Activated CD8-positive, alpha-beta memory T cell treated with anti-CD3 and anti-CD28 coated beads, Interleukin-2, amount 10 ng/mL, durations not matched to agents 7 days and 5 days (primary cell): ENCODE measurements at regions of chr2 and their contacts with region 1.

Region 1: DNA sequence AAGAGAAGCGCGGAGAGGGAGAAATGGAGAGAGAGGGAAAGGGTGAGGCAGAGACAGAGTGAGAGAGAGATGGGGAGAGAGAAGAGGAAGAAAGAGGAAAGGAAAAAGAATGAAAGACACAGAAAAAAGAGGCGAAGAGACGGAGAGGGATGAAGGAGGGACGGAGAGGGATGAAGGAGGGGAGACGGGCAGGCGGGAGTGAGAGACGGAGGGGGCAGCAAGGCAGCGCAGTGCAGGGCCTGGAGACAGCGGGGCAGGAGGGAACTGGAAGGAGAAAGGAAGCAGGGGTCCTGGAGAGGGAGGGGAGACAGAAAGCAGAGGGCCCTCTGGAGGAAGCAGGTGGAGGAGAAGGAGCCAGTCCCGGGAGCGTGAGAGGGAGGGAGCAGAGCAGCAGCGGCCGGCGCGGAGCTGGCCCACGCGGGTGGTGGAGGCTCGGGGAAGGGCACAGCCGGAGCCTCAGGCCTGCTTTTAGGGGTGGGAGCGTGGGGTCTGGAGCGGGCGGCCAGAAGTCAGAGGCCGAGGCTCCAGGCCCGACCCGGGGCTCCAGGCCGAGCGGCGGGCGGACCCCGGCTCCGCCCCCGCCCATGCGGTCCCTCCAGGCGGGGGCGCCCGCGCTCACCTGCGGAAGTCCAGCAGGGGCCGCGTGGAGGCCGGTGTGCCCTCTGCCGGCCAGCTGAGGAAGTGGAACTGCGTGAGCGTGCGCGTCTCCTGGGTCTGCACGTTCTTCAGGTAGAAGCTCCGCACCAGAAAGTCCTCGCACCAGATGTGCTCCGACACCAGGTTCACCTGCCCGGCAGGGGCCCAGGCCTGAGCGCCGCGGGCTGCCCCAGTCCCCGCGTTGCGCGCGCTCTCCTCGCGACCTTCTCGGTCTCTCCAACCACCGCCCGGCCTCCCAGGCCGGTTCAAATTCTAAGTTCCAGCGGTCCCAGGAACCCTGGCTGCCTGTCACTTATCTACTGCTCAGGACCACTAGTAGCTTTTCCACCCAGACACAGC is 14.5 kb downstream of the PTPRN start:
- DNase-seq: peak; percentile 91
- ATAC-seq: peak; percentile 87
- H3K4me3 Mint-ChIP-seq: peak overlapping the region; percentile 70
- H3K27ac Mint-ChIP-seq: peak overlapping the region; percentile 63
- H3K4me1 Mint-ChIP-seq: peaks cover 15% of the 10 kb centered on the region
- H3K27me3 Mint-ChIP-seq: peaks cover 17% of the 10 kb centered on the region

Region 2: DNA sequence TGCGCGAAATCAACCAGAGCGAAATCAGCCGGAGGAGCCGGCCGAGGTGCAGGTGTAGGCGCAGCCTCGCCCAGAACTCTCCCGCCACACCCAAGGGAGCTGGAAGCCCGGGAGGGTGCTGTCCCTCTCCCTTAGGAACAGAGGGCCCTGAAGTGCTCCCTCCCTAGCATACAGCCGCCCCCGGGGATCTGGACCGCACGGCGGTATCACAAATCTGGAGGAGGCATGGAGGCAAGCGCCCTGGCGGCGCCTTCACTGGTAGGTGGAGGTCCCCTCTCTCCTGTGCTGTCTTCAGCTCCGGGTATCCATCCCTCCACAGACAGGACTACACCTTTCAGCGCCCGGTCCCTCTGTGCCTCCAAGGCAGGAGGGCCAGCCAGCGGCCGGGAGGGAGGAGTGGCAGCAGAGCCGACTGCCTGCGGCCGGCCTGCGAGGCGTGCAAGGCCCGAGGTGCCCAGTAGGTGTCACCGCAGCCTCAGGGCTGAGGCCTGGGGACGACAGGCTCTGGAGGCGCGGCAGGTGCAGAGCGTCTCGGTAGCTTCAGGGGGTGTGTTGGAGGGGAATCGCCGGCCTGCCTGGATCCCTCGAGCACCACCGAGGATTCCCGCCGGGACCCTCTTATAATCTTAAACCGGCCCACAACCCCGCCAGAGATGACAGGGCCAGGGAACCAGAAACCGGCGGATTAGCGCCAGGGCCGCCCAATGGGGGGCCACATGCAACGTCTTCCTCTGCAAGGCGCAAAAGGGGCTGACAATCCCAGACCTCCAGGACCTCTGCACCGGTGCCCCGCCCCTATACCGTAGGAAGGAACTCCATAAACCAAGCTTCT is 236.7 kb before region 1 on chr2:
- CTCF ChIA-PET with region 1: interaction called, 14 read pairs
- DNase-seq: peak; percentile 84
- ATAC-seq: peak; percentile 91
- H3K4me3 Mint-ChIP-seq: peak overlapping the region; percentile 39
- H3K27ac Mint-ChIP-seq: no peak overlapping the region
- H3K4me1 Mint-ChIP-seq: peaks cover 22% of the 10 kb centered on the region
- H3K27me3 Mint-ChIP-seq: peaks cover 64% of the 10 kb centered on the region

Region 3: GRCh38 chr2:219171231-219171651 is 123.4 kb before region 1 on chr2:
- CTCF ChIA-PET with region 1: interaction called, 34 read pairs
- DNase-seq: no peak
- ATAC-seq: peak; percentile 45
- H3K4me3 Mint-ChIP-seq: no peak overlapping the region
- H3K27ac Mint-ChIP-seq: no peak overlapping the region
- H3K4me1 Mint-ChIP-seq: peaks cover 36% of the 10 kb centered on the region
- H3K27me3 Mint-ChIP-seq: no peaks in the 10 kb centered on the region

Region 4: GRCh38 chr2:219218732-219219701 is 75.6 kb before region 1 on chr2 and contains the start of gene ABCB6:
- CTCF ChIA-PET with region 1: interaction called, 26 read pairs
- DNase-seq: peak; percentile 89
- ATAC-seq: peak; percentile 78
- H3K4me3 Mint-ChIP-seq: peak within 1 kb of the TSS; percentile 76
- H3K27ac Mint-ChIP-seq: peak within 1 kb of the TSS; percentile 72
- H3K4me1 Mint-ChIP-seq: peaks cover 25% of the 10 kb centered on the region
- H3K27me3 Mint-ChIP-seq: no peaks in the 10 kb centered on the region
- total RNA-seq, gene ABCB6: 12.6 to 15.2 TPM

Region 5: GRCh38 chr2:219253753-219254590 is 40.7 kb before region 1 on chr2 and contains the start of gene TUBA4A:
- CTCF ChIA-PET with region 1: interaction called, 73 read pairs
- DNase-seq: peak; percentile 92
- ATAC-seq: peak; percentile 76
- H3K4me3 Mint-ChIP-seq: peak within 1 kb of the TSS; percentile 99
- H3K27ac Mint-ChIP-seq: peak within 1 kb of the TSS; percentile 97
- H3K4me1 Mint-ChIP-seq: peaks cover 44% of the 10 kb centered on the region
- H3K27me3 Mint-ChIP-seq: peaks cover 3% of the 10 kb centered on the region
- total RNA-seq, gene TUBA4A: 244 to 337 TPM

Region 6: DNA sequence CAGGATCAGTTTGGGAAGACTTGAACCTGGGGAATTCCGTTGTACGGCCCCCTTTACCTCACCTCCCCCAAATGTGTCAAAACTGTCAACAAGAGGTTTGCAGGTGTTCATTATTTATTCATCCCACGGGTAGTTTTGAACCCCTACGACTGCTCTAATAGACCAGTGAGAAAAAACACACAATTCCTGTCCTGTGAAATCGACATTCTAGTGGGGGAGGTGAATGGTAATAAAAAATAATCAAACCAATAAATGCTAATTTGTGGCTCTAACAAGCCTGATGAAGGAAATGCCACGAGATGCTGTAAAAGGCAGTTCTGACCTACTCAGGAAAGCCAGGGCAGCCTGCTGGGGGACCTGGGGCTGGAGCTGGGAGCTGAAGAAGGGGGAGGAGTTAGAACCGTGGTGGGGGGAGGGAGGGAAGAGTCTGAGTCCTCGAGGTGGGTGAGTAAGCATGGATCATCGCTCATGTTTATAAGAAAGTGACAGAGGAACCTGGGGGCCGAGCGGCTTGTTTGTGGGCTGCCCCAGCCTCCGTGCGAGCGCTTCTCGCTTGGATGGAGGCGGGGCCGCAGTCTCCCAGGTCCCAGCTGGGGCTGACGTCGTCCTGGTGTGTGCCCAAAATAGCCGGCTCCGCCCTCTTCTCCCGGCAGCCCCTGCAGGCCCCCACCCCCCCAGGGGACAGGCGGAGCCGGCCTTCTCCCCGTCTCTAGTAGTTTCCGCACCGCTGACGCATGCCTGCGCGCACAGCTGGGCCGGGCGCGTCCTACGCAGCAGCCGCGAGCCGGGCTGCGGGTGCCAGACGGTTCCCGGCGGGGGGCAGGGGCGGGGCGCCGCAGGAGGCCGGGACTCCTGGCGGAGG is 15.8 kb before region 1 on chr2 and contains the start of gene DNAJB2:
- CTCF ChIA-PET with region 1: interaction called, 260 read pairs
- DNase-seq: peak; percentile 99
- ATAC-seq: peak; percentile 90
- H3K4me3 Mint-ChIP-seq: peak within 1 kb of the TSS; percentile 94
- H3K27ac Mint-ChIP-seq: peak within 1 kb of the TSS; percentile 96
- H3K4me1 Mint-ChIP-seq: peaks cover 32% of the 10 kb centered on the region
- H3K27me3 Mint-ChIP-seq: no peaks in the 10 kb centered on the region
- total RNA-seq, gene DNAJB2: 48.2 to 49.0 TPM

Region 7: DNA sequence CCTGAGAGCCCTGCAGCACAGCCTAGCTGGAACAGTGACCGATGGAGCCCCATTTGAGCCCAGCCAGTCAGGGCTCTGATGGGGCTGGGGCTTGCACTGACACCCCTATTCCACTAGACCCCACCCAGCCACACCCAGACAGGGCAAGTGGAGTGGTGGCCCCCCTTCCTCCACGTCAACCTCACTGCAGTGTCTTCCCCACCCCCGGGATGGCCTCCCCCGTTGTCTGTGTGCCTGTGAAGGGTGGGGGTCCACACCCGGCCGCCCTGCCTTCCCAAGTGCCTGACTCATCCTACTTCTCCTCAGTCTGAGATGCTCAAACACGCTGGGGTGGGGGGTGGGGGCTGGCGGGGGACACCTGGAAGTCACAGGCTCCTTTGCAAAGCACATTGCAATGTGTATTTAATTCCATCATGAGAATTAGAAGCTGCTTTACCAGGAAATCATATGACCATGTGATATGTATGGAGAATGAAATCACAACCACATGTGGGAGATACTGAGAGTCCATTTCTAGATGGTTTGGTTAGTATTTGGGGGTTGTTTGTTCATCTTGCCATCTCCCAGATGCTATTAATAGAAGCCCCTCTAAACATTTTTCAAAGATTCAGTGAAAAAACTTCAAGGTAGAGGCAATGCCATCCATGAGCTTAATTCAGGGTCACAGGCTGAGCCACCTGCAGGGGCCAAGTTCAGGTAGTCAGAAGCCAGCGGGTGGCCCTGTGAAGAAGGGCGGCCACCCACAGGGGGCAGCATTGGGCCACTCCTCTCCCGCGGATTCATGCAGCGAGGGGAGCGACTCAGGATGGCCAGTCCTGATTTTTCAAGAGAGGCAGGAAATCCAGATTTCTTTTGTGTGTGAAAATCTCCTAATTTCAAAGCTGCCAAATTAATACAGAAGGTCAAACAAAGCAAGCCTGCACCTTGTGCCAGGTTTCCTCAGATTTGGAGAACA is 181.3 kb after region 1 on chr2:
- CTCF ChIA-PET with region 1: no interaction called
- DNase-seq: peak; percentile 70
- ATAC-seq: peak; percentile 77
- H3K4me3 Mint-ChIP-seq: no peak overlapping the region
- H3K27ac Mint-ChIP-seq: no peak overlapping the region
- H3K4me1 Mint-ChIP-seq: no peaks in the 10 kb centered on the region
- H3K27me3 Mint-ChIP-seq: no peaks in the 10 kb centered on the region